GM10248 (cell line): ENCODE measurements at regions of chr1 and their contacts with region 1.

Region 1: DNA sequence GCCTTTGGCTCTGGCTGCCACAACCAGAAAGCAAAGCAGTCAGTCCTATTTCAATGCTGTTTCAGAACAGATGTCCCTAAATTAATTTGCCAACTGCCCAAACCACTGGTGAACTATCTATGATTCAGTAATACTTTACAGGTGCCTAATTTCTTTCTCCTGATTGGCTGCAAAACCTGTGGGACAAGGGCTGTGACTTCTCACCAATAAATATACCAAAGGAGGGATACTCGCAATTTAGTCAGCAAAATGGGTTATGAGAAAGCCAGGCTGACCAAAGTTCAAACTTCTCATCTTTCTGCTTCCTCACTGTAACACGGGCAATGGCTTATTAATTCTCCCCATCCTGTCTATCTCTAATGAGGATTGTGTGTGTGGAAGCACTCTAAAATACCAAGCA is 12.8 kb downstream of the GPN2 start:
- DNase-seq: no peak
- CTCF ChIP-seq: no peak

Region 2: GRCh38 chr1:26853156-26853555 is 24.2 kb before region 1 on chr1:
- CTCF ChIA-PET with region 1: interaction called, 21 read pairs
- POLR2A ChIA-PET with region 1: no interaction called
- DNase-seq: peak; percentile 82
- CTCF ChIP-seq: peak; percentile 70

Region 3: GRCh38 chr1:26858160-26858559 is 19.2 kb before region 1 on chr1:
- CTCF ChIA-PET with region 1: interaction called, 70 read pairs
- POLR2A ChIA-PET with region 1: no interaction called
- DNase-seq: no peak
- CTCF ChIP-seq: no peak

Region 4: GRCh38 chr1:26889551-26890466 is 12.5 kb after region 1 on chr1 and contains the start of gene GPN2:
- CTCF ChIA-PET with region 1: interaction called, 21 read pairs
- POLR2A ChIA-PET with region 1: no interaction called
- DNase-seq: peak; percentile 94
- CTCF ChIP-seq: no peak

Region 5: GRCh38 chr1:26921540-26922430 is 44.5 kb after region 1 on chr1 and contains the start of gene NUDC:
- CTCF ChIA-PET with region 1: no interaction called
- POLR2A ChIA-PET with region 1: no interaction called
- DNase-seq: peak; percentile 98
- CTCF ChIP-seq: no peak

Region 6: GRCh38 chr1:27087371-27088220 is 210.3 kb after region 1 on chr1:
- CTCF ChIA-PET with region 1: no interaction called
- POLR2A ChIA-PET with region 1: no interaction called
- DNase-seq: no peak
- CTCF ChIP-seq: no peak